ENCODE measurements at regions of chr1 and their contacts with region 1.

Region 1: GRCh38 chr1:18913065-18913835 is 10.9 kb upstream of the ALDH4A1 start:
- H3K4me3 ChIP-seq: no peak overlapping the region
- H3K27ac ChIP-seq: no peak overlapping the region
- H3K4me1 ChIP-seq: no peaks in the 10 kb centered on the region; the same call in none of the 2 replicates
- CTCF ChIP-seq: peak; percentile 87

Region 2: DNA sequence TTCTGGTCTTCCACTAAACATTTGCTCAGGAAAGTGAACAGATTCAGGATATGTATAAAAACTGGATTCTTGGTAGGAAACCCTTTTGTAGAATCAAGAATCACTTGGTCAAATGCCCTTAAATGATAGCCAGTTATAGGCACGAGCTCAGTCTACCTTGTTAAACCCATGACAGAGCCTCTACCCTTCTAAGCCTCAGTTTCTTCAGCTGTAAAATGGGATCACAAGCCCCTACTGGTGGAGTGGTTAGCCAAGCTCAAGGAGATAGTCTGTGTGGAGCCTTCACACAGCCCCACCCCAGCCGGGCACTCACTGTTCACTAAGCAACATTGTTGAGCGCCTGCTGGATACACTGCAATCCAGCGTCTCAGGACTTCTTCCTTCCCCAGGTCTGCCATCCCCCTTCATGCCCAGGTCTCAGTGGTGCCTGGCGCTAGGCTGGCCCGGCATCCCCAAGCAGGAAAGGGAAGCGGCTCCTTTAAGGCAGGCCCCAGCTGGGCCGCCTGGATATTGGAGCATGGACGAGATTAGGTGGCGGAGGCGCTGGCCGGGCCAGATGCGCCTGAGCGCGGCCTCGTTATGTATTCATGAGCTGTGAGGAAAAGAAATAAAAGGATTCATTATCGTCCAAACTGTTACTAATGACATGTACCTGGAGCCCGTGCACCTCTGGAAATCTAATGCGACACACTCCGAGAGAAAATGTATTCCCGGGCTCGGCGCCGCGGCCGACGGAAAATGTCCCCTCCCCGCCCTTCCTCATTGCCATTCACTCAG is 129.4 kb before region 1 on chr1:
- CTCF ChIA-PET with region 1: no interaction called
- POLR2A ChIA-PET with region 1: no interaction called
- H3K4me3 ChIP-seq: no peak overlapping the region
- H3K27ac ChIP-seq: no peak overlapping the region
- H3K4me1 ChIP-seq: no peaks in the 10 kb centered on the region
- CTCF ChIP-seq: no peak

Region 3: DNA sequence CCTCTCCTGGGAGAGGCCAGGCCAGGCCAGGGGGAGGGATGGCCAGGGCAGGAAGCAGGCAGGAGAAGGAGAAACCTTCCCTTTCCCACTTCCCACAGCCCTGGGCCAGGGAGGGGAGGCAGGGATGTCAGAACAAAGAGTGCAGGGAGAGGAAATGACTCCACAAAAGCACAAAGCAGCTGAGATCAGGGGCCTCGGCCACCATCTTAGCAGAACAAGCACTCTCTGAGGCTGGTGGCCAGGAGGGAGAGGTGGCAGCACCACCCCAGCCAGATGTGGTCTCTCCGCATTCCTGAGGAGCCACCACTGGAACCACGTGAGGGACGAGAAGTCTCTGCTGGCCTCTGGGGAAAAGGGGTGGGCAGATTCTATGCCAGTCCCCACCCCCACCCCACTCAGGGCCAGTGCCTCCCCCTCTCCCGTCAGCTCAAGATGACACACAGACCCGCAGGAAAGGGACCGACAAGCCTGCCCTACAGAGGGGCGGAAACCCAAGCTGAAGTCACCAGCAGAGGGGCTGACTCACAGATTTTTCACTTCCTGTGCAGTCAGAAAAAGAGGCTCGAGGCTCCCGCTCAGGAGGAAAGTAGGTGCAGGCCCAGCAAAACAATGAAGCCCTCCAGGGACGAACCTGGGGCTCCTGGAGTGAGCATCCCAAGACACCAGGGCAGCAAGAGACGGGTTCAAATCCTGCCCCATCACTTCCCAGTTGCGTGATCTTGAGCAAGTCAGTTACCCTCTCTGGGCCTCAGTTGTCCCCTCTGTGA is 13.2 kb after region 1 on chr1:
- CTCF ChIA-PET with region 1: interaction called, 68 read pairs
- POLR2A ChIA-PET with region 1: interaction called, 6 read pairs
- H3K4me3 ChIP-seq: no peak overlapping the region
- H3K27ac ChIP-seq: no peak overlapping the region
- H3K4me1 ChIP-seq: peaks cover 9% of the 10 kb centered on the region
- CTCF ChIP-seq: no peak

Region 4: GRCh38 chr1:18949686-18950400 is 36.6 kb after region 1 on chr1:
- CTCF ChIA-PET with region 1: interaction called, 59 read pairs
- POLR2A ChIA-PET with region 1: interaction called, 4 read pairs
- H3K4me3 ChIP-seq: no peak overlapping the region
- H3K27ac ChIP-seq: no peak overlapping the region
- H3K4me1 ChIP-seq: peaks cover 11% of the 10 kb centered on the region
- CTCF ChIP-seq: no peak

Region 5: GRCh38 chr1:18999359-18999758 is 86.1 kb after region 1 on chr1:
- CTCF ChIA-PET with region 1: interaction called, 10 read pairs
- POLR2A ChIA-PET with region 1: no interaction called
- H3K4me3 ChIP-seq: no peak overlapping the region
- H3K27ac ChIP-seq: no peak overlapping the region
- H3K4me1 ChIP-seq: no peaks in the 10 kb centered on the region
- CTCF ChIP-seq: no peak

Region 6: DNA sequence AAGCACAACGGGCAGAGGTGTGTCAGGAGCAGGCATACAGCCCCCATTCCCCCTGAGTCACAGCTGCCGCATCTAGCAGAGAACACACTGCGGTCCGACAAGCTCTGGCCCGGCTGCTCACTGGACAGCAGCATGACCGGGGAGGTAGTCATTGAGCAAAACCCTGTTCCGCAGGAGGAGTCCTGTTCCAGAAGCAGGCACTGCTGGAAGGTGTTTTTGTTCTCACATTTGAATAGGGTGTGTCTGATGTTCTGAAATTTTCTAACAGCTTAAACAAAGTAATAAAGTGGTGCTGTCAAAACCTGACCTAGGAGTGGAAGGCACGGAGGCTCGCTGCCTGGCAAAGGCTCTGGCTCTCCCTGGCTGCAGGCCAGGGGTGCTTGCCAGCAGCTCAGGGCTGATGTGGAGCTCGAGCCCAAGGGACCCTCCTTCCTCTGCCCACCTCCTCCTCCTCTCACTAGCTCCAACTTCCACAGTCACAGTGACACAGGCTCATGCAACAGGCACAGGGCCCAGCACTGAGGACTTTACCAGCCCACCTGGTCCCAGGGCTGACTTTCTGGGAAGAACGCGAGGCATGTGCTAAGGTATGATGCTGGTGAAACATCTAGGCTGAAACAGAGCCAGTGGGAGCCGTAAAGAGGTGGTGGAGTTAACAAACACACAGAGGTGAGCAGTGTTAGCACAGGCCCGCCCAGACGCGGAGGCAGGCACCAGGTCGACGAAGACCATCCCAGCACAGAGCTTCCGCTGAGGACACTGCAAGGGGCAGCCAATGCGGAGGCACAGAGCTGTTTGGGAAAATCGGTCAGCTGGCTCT is 161.9 kb after region 1 on chr1:
- CTCF ChIA-PET with region 1: interaction called, 29 read pairs
- POLR2A ChIA-PET with region 1: no interaction called
- H3K4me3 ChIP-seq: no peak overlapping the region
- H3K27ac ChIP-seq: no peak overlapping the region
- H3K4me1 ChIP-seq: no peaks in the 10 kb centered on the region
- CTCF ChIP-seq: no peak

Region 7: GRCh38 chr1:19113697-19114092 is 200.4 kb after region 1 on chr1:
- CTCF ChIA-PET with region 1: interaction called, 27 read pairs
- POLR2A ChIA-PET with region 1: no interaction called
- H3K4me3 ChIP-seq: no peak overlapping the region
- H3K27ac ChIP-seq: no peak overlapping the region
- H3K4me1 ChIP-seq: no peaks in the 10 kb centered on the region
- CTCF ChIP-seq: peak; percentile 44; the same call in 1 of the 2 replicates